ENCODE measurements at regions of chr3 and their contacts with region 1.

Region 1: DNA sequence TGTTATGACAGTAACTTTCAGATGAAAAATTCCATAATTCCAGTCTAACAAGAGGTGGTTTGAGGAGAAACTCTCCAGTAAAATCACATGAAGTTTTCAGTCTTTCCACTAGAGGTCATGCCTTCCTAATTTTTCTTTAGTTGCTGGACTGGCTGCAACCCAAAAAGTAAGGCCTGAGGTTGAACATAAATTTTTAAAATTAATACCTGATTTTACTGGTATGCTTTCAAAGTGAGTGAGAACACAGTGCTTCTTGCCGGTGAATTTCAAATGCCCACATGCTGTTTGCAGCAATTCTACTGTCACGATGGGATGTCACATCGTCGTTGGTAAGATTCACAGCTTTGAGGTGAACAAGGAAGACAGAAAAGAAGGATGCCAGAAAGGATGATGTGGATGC is 89.0 kb upstream of the FGF12 start:
- DNase-seq: peak in 1 of 2 donors; percentile 15
- H3K4me3 ChIP-seq: no peak overlapping the region
- H3K27ac ChIP-seq: no peak overlapping the region
- H3K4me1 ChIP-seq: peaks cover 9 to 14% of the 10 kb centered on the region in 2 donors
- H3K27me3 ChIP-seq: no peaks in the 10 kb centered on the region
- CTCF ChIP-seq: peak; percentile 25 to 75 (median 60)
- POLR2A ChIP-seq: no peak

Region 2: GRCh38 chr3:192917404-192918274 is 101.3 kb after region 1 on chr3 and contains the start of gene MB21D2:
- intact Hi-C with region 1: loop called (anchors 10 kb)
- DNase-seq: peak; percentile 71
- H3K4me3 ChIP-seq: peak within 1 kb of the TSS; percentile 43 to 77 (median 69)
- H3K27ac ChIP-seq: peak within 1 kb of the TSS; percentile 82 to 91 (median 86)
- H3K4me1 ChIP-seq: peaks cover 0 to 6% of the 10 kb centered on the region in 2 donors
- H3K27me3 ChIP-seq: no peaks in the 10 kb centered on the region
- CTCF ChIP-seq: peak in 1 of 6 experiments; percentile 11
- POLR2A ChIP-seq: peak in 1 of 2 donors; percentile 50
- total RNA-seq, gene MB21D2: 3.4 to 5.2 (median 3.9) TPM

Region 3: DNA sequence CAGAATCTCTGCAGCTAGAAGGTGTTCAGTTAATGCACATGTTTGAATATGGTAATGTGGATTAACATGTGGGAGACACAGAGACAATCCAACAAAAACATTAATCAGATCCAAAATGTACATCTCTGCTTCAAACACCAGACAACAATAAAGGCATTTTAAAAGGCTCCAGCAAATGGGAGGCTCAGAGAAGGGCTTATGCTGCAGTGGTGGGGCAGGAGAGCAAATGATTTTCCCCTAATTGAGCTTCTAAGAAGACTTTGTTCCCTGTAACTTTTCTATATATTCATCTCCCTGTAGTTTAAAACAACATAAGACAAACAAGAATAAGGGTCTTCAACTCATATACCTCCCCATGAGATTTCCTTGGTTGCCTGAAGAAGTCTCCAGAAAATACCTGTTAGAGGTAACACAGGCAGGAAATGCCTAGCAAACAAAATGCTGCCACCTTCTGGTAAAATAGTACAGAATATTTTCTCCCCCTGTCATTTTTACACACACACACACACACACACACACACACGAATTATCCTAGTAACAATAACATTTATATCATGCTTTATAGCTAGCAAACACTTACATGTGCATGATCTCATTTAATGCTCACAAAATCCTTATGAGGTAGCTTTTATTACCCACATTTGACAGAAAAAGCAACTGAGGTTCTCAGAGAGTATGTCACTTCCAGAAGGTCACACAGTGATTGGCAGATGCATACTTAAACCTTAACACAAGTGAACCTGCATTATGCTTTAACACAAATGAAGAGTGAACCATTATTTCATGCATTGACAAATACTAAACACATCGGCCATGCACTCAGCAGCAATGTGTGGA is 224.7 kb after region 1 on chr3:
- intact Hi-C with region 1: loop called (anchors 5 kb)
- DNase-seq: no peak
- H3K4me3 ChIP-seq: no peak overlapping the region
- H3K27ac ChIP-seq: no peak overlapping the region
- H3K4me1 ChIP-seq: no peaks in the 10 kb centered on the region
- H3K27me3 ChIP-seq: no peaks in the 10 kb centered on the region
- CTCF ChIP-seq: peak in 4 of 6 experiments; percentile 33 to 82 (median 64)
- POLR2A ChIP-seq: no peak

Region 4: GRCh38 chr3:193572426-193572908 is 756.1 kb after region 1 on chr3:
- intact Hi-C with region 1: loop called (anchors 5 kb)
- DNase-seq: peak; percentile 66 to 75
- H3K4me3 ChIP-seq: no peak overlapping the region
- H3K27ac ChIP-seq: no peak overlapping the region
- H3K4me1 ChIP-seq: no peaks in the 10 kb centered on the region
- H3K27me3 ChIP-seq: no peaks in the 10 kb centered on the region
- CTCF ChIP-seq: peak; percentile 51 to 90 (median 78)
- POLR2A ChIP-seq: no peak